ENCODE measurements at regions of chr2 and their contacts with region 1.

Region 1: GRCh38 chr2:196758474-196759377 is 40.8 kb downstream of the GTF3C3 start:
- DNase-seq: peak; percentile 40
- H3K4me3 ChIP-seq: no peak overlapping the region
- H3K27ac ChIP-seq: no peak overlapping the region
- H3K4me1 ChIP-seq: no peaks in the 10 kb centered on the region
- H3K27me3 ChIP-seq: no peaks in the 10 kb centered on the region
- CTCF ChIP-seq: peak in 1 of 2 donors; percentile 26
- POLR2A ChIP-seq: no peak

Region 2: GRCh38 chr2:196220671-196221070 is 538.1 kb before region 1 on chr2:
- CTCF ChIA-PET with region 1: no interaction called
- POLR2A ChIA-PET with region 1: no interaction called
- dilution Hi-C with region 1: no loop called
- intact Hi-C with region 1: no loop called
- DNase-seq: no peak
- H3K4me3 ChIP-seq: no peak overlapping the region
- H3K27ac ChIP-seq: no peak overlapping the region
- H3K4me1 ChIP-seq: no peaks in the 10 kb centered on the region
- H3K27me3 ChIP-seq: no peaks in the 10 kb centered on the region
- CTCF ChIP-seq: no peak
- POLR2A ChIP-seq: no peak

Region 3: GRCh38 chr2:196535742-196536141 is 223.0 kb before region 1 on chr2:
- CTCF ChIA-PET with region 1: interaction called, 6 read pairs
- POLR2A ChIA-PET with region 1: no interaction called
- dilution Hi-C with region 1: no loop called
- intact Hi-C with region 1: loop called (anchors 1 kb)
- DNase-seq: peak; percentile 10
- H3K4me3 ChIP-seq: no peak overlapping the region
- H3K27ac ChIP-seq: no peak overlapping the region
- H3K4me1 ChIP-seq: no peaks in the 10 kb centered on the region
- H3K27me3 ChIP-seq: peaks cover 7 to 27% of the 10 kb centered on the region in 2 experiments
- CTCF ChIP-seq: no peak
- POLR2A ChIP-seq: no peak

Region 4: GRCh38 chr2:196725882-196726281 is 32.8 kb before region 1 on chr2:
- CTCF ChIA-PET with region 1: no interaction called
- POLR2A ChIA-PET with region 1: no interaction called
- dilution Hi-C with region 1: no loop called
- intact Hi-C with region 1: no loop called
- DNase-seq: no peak
- H3K4me3 ChIP-seq: no peak overlapping the region
- H3K27ac ChIP-seq: no peak overlapping the region
- H3K4me1 ChIP-seq: no peaks in the 10 kb centered on the region
- H3K27me3 ChIP-seq: no peaks in the 10 kb centered on the region
- CTCF ChIP-seq: no peak
- POLR2A ChIP-seq: no peak

Region 5: GRCh38 chr2:196808083-196808665 is 49.4 kb after region 1 on chr2:
- CTCF ChIA-PET with region 1: no interaction called
- POLR2A ChIA-PET with region 1: no interaction called
- dilution Hi-C with region 1: no loop called
- intact Hi-C with region 1: no loop called
- DNase-seq: peak; percentile 45
- H3K4me3 ChIP-seq: no peak overlapping the region
- H3K27ac ChIP-seq: no peak overlapping the region
- H3K4me1 ChIP-seq: no peaks in the 10 kb centered on the region
- H3K27me3 ChIP-seq: peaks cover 4 to 8% of the 10 kb centered on the region in 2 experiments
- CTCF ChIP-seq: no peak
- POLR2A ChIP-seq: no peak

Measured in endothelial cell of umbilical vein (primary cell).